Endothelial cell of umbilical vein (primary cell): ENCODE measurements at regions of chr10 and their contacts with region 1.

Region 1: DNA sequence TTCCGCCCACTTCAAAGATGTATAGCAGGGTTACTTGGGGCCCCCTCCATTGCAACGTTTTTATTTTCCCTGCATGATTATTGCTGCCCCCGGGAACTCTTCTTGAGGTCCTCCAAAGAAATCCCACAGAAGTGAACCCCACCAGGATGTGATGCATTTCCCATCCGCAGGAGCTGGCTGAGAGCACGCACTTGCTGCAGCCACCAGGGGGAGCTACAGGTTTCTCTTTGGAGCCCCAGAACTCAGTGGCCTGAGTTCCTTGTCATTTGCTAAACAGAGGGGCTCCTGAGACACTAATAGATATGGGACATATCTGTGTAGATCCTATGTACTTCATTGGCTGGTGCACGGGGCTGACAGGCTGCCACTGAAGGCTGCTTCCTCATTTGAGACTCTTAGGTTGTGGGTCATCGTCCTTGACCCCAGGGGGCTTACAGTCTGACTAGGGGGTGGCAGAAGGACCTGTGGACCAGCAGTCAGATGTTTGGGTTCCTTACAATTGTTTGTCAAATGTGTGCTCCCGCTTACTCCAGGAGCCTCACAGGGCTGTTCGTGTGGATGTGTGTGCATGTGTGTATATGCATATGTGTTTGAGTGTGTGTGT is 52.3 kb upstream of the ENO4 start:
- DNase-seq: peak; percentile 69
- H3K4me3 ChIP-seq: no peak overlapping the region
- H3K27ac ChIP-seq: no peak overlapping the region
- H3K4me1 ChIP-seq: no peaks in the 10 kb centered on the region
- H3K27me3 ChIP-seq: no peaks in the 10 kb centered on the region
- CTCF ChIP-seq: peak; percentile 89 to 95
- POLR2A ChIP-seq: no peak

Region 2: DNA sequence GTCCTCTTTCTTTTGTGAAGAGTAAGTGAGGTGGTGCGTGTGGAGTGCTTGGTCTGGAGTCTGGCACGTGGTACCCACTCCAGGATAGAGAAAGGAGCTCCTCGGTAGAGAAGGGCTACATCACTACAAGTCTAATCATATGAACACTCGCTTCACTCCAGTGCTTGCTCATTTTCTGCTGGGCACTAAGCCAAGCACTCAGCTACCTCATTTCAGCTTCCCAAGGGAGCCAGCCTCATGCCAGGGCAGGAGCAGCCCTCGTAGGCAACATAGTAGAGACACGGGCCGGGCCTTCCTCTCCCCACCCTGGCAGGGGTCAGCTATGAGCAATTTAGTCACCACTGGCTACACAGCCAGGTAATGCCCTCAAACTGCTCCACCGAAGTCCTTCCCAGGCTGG is 43.3 kb before region 1 on chr10:
- CTCF ChIA-PET with region 1: no interaction called
- POLR2A ChIA-PET with region 1: no interaction called
- dilution Hi-C with region 1: no loop called
- intact Hi-C with region 1: no loop called
- DNase-seq: no peak
- H3K4me3 ChIP-seq: no peak overlapping the region
- H3K27ac ChIP-seq: no peak overlapping the region
- H3K4me1 ChIP-seq: no peaks in the 10 kb centered on the region
- H3K27me3 ChIP-seq: no peaks in the 10 kb centered on the region
- CTCF ChIP-seq: no peak
- POLR2A ChIP-seq: no peak

Region 3: DNA sequence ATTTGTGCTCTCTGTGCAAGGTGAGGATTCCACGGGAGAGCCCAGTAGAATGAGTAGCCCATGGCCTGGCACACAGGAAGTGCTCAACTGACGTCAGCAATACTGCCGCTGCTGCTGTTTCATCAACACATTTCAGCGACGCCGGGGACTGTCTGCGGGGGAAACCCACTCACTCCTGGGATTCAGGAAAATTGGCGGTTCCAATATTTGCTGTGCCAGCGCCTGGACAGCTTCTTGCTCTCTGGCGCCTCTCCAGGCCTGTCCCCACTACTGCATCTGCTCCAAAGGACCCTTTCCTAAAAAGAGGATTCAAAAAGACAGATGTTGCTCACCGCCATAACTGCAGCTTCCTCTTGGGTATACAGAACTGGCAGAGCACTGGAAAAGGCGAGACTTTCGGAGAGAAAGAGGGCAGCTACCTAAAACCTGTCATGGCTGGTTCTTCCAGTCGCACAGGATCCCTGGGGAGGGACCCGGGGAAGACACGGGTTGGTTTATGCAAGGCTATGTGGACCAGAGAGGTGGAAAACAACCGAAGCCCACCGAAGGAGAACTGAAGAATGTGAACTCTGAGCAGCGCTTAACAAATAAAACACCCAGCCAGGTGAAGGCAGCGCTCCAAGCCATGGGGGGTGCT is 12.6 kb after region 1 on chr10:
- CTCF ChIA-PET with region 1: interaction called, 17 read pairs
- POLR2A ChIA-PET with region 1: no interaction called
- dilution Hi-C with region 1: no loop called
- intact Hi-C with region 1: no loop called
- DNase-seq: no peak
- H3K4me3 ChIP-seq: no peak overlapping the region
- H3K27ac ChIP-seq: no peak overlapping the region
- H3K4me1 ChIP-seq: no peaks in the 10 kb centered on the region
- H3K27me3 ChIP-seq: no peaks in the 10 kb centered on the region
- CTCF ChIP-seq: peak; percentile 15 to 17
- POLR2A ChIP-seq: no peak

Region 4: DNA sequence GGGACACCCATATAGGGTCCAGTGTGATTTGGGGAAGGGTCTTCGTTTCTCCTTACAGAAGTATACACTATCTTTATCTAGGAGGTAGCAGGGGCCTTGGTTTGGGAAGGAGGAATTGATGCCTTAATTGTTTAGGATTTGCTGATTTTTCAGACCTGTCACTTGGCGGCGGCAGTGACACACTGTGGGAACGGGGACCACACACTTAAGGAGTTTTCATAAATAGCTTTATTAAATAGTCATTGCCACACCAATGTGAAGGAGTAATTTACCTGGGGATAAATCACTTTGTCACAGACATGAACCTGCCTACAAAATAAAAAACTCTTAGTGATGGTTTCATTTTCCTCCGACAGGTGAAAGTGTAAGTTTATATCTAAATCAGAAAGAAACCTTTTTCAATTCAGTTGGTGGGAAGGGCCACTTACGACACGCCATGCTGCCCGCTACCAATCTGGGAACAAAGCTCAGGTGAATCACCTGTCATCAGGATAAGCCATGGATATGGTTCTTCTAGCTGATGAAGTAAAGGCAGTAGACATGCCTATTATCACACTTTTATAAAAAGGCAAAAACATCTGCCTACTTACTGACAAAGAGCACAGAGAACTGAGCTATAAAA is 40.0 kb after region 1 on chr10:
- CTCF ChIA-PET with region 1: interaction called, 18 read pairs
- POLR2A ChIA-PET with region 1: no interaction called
- dilution Hi-C with region 1: no loop called
- intact Hi-C with region 1: loop called (anchors 2 kb)
- DNase-seq: peak; percentile 44
- H3K4me3 ChIP-seq: no peak overlapping the region
- H3K27ac ChIP-seq: no peak overlapping the region
- H3K4me1 ChIP-seq: no peaks in the 10 kb centered on the region
- H3K27me3 ChIP-seq: peaks cover 13 to 18% of the 10 kb centered on the region in 2 experiments
- CTCF ChIP-seq: peak; percentile 31 to 38
- POLR2A ChIP-seq: no peak

Region 5: DNA sequence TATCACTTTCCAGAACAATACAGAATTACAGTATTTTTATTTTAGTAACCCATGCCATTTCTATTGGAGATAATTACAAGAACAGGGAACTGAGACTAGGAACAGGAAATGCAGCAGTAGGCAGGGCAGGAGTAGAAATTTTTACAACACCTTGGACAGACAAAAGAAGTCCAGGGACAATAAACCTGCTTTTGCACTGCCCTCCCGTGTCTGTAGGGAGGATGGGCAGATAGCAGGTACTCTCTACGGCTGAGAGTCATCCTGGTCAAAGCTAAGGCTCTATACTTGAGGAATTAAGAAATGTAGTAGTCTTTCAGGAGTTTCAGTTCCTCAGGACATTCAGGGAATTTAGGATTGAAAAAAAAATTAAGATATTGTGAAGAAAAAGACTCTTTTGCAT is 277.6 kb after region 1 on chr10:
- CTCF ChIA-PET with region 1: interaction called, 4 read pairs
- POLR2A ChIA-PET with region 1: no interaction called
- dilution Hi-C with region 1: no loop called
- intact Hi-C with region 1: loop called (anchors 10 kb)
- DNase-seq: no peak
- H3K4me3 ChIP-seq: no peak overlapping the region
- H3K27ac ChIP-seq: no peak overlapping the region
- H3K4me1 ChIP-seq: no peaks in the 10 kb centered on the region
- H3K27me3 ChIP-seq: no peaks in the 10 kb centered on the region
- CTCF ChIP-seq: no peak
- POLR2A ChIP-seq: no peak